ENCODE measurements at regions of chr21 and their contacts with region 1.

Region 1: GRCh38 chr21:32940079-32941014 is 85.4 kb upstream of the OLIG2 start:
- DNase-seq: peak; percentile 40
- H3K4me3 ChIP-seq: no peak overlapping the region
- H3K27ac ChIP-seq: no peak overlapping the region
- H3K4me1 ChIP-seq: no peaks in the 10 kb centered on the region
- H3K27me3 ChIP-seq: peaks cover 4 to 5% of the 10 kb centered on the region in 2 experiments
- CTCF ChIP-seq: peak; percentile 69 to 75
- POLR2A ChIP-seq: no peak

Region 2: DNA sequence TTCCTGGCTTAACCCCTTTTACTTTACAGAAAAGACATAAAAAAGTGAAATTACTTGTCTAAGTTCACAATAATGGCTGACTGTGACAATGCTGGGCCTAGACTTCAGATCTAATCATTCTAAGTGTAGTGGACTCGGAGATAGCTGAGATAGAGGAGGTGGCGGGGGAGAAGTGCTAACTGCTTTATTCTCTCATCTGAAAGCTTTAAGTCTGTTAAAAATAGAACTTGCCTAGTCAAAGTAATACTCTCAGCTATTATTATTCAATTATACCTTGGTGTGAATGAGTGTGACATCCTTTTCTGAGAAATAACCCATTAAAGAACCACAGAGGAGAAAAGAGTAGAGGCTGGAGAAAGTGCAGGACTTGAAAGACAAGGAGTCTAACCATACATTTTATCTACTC is 10.7 kb before region 1 on chr21:
- CTCF ChIA-PET with region 1: interaction called, 36 read pairs
- POLR2A ChIA-PET with region 1: no interaction called
- dilution Hi-C with region 1: no loop called
- intact Hi-C with region 1: no loop called
- DNase-seq: no peak
- H3K4me3 ChIP-seq: no peak overlapping the region
- H3K27ac ChIP-seq: no peak overlapping the region
- H3K4me1 ChIP-seq: no peaks in the 10 kb centered on the region
- H3K27me3 ChIP-seq: no peaks in the 10 kb centered on the region
- CTCF ChIP-seq: no peak
- POLR2A ChIP-seq: no peak

Region 3: GRCh38 chr21:32966120-32966519 is 25.8 kb after region 1 on chr21:
- CTCF ChIA-PET with region 1: interaction called, 12 read pairs
- POLR2A ChIA-PET with region 1: no interaction called
- dilution Hi-C with region 1: no loop called
- intact Hi-C with region 1: no loop called
- DNase-seq: no peak
- H3K4me3 ChIP-seq: no peak overlapping the region
- H3K27ac ChIP-seq: no peak overlapping the region
- H3K4me1 ChIP-seq: no peaks in the 10 kb centered on the region
- H3K27me3 ChIP-seq: peaks cover 5 to 7% of the 10 kb centered on the region in 2 experiments
- CTCF ChIP-seq: no peak
- POLR2A ChIP-seq: no peak

Region 4: GRCh38 chr21:32994305-32994704 is 54.0 kb after region 1 on chr21:
- CTCF ChIA-PET with region 1: interaction called, 28 read pairs
- POLR2A ChIA-PET with region 1: no interaction called
- dilution Hi-C with region 1: no loop called
- intact Hi-C with region 1: loop called (anchors 5 kb)
- DNase-seq: peak; percentile 27
- H3K4me3 ChIP-seq: no peak overlapping the region
- H3K27ac ChIP-seq: no peak overlapping the region
- H3K4me1 ChIP-seq: no peaks in the 10 kb centered on the region
- H3K27me3 ChIP-seq: peaks cover 17 to 37% of the 10 kb centered on the region in 2 experiments
- CTCF ChIP-seq: peak; percentile 38 to 44
- POLR2A ChIP-seq: no peak

Region 5: GRCh38 chr21:33064623-33065390 is 124.5 kb after region 1 on chr21:
- CTCF ChIA-PET with region 1: interaction called, 12 read pairs
- POLR2A ChIA-PET with region 1: no interaction called
- dilution Hi-C with region 1: no loop called
- intact Hi-C with region 1: no loop called
- DNase-seq: peak; percentile 24
- H3K4me3 ChIP-seq: no peak overlapping the region
- H3K27ac ChIP-seq: no peak overlapping the region
- H3K4me1 ChIP-seq: peaks cover 8% of the 10 kb centered on the region
- H3K27me3 ChIP-seq: peaks cover 50 to 71% of the 10 kb centered on the region in 2 experiments
- CTCF ChIP-seq: no peak
- POLR2A ChIP-seq: no peak

Region 6: DNA sequence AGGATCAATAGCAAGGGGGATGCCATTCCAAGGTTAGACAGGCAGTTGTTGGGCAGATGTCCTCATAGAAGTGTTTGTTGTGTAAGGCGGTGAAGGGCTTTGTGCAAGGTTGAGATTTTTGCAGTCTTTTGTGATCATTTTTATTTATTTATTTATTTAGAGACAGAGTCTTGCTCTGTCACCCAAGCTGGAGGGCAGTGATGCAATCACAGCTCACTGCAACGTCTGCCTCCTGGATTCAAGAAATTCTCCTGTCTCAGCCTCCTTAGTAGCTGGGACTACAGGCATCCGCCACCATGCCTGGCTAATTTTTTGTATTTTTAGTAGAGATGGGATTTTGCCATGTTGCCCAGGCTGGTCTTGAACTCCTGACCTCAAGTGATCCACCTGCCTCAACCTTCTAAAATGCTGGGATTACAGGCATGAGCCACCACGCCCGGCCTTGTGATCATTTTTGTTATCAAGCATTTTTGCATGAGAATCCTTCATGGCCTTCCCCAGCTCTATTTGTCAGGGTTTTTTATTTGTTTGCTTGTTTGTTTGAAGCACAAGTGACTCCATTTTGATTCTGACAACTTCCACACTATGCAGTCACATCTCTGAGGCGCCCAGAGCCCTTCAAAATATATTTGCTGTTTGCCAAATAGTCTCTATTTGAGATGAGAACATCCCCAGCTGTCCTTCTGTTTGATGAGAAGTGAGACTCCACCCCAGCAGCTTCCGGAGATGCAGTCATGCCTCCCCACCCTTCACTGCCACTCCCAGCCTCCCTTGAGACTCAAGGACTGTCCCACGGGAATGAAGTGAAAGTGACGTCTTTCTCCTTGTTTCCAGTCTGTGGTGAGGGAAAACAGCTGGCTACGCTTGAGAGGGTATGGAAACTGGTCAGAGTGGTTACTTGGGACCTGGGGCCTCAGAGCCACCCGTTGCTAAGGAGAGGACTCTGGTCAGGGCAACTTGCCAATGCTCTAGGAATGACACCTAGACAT is 501.4 kb after region 1 on chr21:
- CTCF ChIA-PET with region 1: interaction called, 26 read pairs
- POLR2A ChIA-PET with region 1: no interaction called
- dilution Hi-C with region 1: no loop called
- intact Hi-C with region 1: loop called (anchors 1 kb)
- DNase-seq: no peak
- H3K4me3 ChIP-seq: no peak overlapping the region
- H3K27ac ChIP-seq: no peak overlapping the region
- H3K4me1 ChIP-seq: no peaks in the 10 kb centered on the region
- H3K27me3 ChIP-seq: no peaks in the 10 kb centered on the region
- CTCF ChIP-seq: no peak
- POLR2A ChIP-seq: no peak

Region 7: GRCh38 chr21:33655591-33656221 is 715.4 kb after region 1 on chr21:
- CTCF ChIA-PET with region 1: no interaction called
- POLR2A ChIA-PET with region 1: no interaction called
- dilution Hi-C with region 1: no loop called
- intact Hi-C with region 1: no loop called
- DNase-seq: peak; percentile 90
- H3K4me3 ChIP-seq: no peak overlapping the region
- H3K27ac ChIP-seq: peak overlapping the region; percentile 81
- H3K4me1 ChIP-seq: peaks cover 52% of the 10 kb centered on the region
- H3K27me3 ChIP-seq: no peaks in the 10 kb centered on the region
- CTCF ChIP-seq: no peak
- POLR2A ChIP-seq: no peak